ENCODE measurements at regions of chr11 and their contacts with region 1.

Region 1: GRCh38 chr11:15819679-15820286 is 536.6 kb downstream of the SOX6 start:
- DNase-seq: peak; percentile 78 to 92 (median 88)
- ATAC-seq: peak; percentile 93 to 94
- H3K4me3 ChIP-seq: no peak overlapping the region
- H3K27ac ChIP-seq: no peak overlapping the region
- H3K4me1 ChIP-seq: peaks cover 9% of the 10 kb centered on the region
- H3K27me3 ChIP-seq: no peaks in the 10 kb centered on the region

Region 2: GRCh38 chr11:15650105-15650938 is 169.5 kb before region 1 on chr11:
- intact Hi-C with region 1: loop called in 2 of 4 experiments (anchors 5 to 10 kb)
- DNase-seq: peak; percentile 96 to 99 (median 99)
- ATAC-seq: peak; percentile 98 to 100
- H3K4me3 ChIP-seq: peak overlapping the region; percentile 13
- H3K27ac ChIP-seq: peak overlapping the region; percentile 40
- H3K4me1 ChIP-seq: peaks cover 6% of the 10 kb centered on the region
- H3K27me3 ChIP-seq: no peaks in the 10 kb centered on the region

Region 3: GRCh38 chr11:15883455-15883920 is 63.7 kb after region 1 on chr11:
- intact Hi-C with region 1: no loop called
- DNase-seq: peak in 1 of 3 donors; percentile 57
- ATAC-seq: peak; percentile 53 to 79
- H3K4me3 ChIP-seq: no peak overlapping the region
- H3K27ac ChIP-seq: peak overlapping the region; percentile 56
- H3K4me1 ChIP-seq: no peaks in the 10 kb centered on the region
- H3K27me3 ChIP-seq: no peaks in the 10 kb centered on the region

Region 4: DNA sequence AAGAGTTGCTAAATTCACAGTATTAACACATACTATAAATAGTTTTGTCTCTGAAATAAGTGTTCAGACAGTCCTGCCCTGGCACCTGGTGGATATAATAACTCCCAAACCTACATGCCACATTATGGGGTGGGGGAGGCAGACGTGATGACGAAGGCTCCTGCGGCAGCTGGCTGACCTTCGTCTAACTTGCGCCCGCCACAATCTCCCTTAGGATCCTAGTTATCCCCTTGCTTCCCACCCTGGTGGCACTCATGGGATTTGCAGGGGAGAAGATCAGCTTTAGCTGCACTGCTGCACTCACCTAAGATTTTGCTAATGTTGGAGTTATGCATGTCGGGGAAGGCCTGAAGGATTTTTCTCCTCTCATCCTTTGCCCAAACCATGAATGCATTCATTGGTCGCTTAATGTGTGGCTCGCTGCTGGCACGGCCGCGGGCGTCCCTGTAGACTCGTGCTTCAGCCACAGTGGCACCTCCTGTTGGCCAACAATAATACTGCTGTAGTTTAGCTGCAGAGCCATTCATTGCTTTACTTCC is 169.0 kb after region 1 on chr11:
- intact Hi-C with region 1: loop called in 1 of 4 experiments (anchors 10 kb)
- DNase-seq: peak; percentile 19 to 64 (median 58)
- ATAC-seq: peak; percentile 80 to 87
- H3K4me3 ChIP-seq: no peak overlapping the region
- H3K27ac ChIP-seq: peak overlapping the region; percentile 60
- H3K4me1 ChIP-seq: peaks cover 6% of the 10 kb centered on the region
- H3K27me3 ChIP-seq: no peaks in the 10 kb centered on the region

Region 5: DNA sequence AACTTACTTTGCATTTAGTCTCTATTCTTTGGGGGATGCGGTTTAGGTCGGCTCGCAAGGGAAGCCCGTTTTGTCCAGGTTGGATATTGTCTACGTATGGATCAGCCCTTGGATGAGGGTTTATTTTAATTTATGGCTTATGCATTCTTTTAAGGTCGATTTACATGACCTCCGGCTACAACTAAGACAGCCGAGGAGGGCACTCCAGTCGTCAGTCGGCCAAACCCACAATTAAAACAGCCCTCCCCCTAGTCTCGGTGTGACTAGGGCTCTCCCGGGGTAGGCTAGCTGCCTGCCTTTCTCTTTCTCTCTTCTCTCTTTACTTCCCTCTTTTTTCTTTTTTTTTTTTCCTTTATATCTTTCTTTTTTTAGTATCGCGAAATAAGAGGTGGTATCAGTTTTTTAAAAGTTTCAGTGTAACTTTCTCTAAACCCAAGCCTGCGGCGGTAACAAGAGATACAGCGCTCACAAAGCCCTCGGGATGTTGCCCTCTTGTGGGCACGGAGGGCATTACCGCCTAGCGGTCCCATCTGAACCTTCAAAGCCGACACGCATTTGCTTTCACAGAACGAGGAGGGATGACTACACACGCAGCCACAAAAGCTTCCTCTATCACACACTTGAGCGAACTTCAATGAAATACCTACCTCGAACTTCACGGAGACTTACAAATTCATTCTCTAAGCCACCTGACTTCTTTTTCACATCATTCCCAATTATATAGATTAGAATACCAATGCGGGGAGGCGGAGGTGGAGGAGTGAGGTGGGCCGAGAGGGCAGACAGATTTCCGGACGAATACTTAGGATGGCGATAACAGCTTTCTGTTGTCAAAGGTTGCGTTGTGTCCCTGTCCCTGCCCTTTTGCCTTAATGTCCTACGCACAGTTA is 786.4 kb after region 1 on chr11:
- intact Hi-C with region 1: loop called in 1 of 4 experiments (anchors 10 kb)
- DNase-seq: peak; percentile 90 to 96 (median 95)
- ATAC-seq: peak; percentile 63 to 73
- H3K4me3 ChIP-seq: peak overlapping the region; percentile 74
- H3K27ac ChIP-seq: peak overlapping the region; percentile 92
- H3K4me1 ChIP-seq: no peaks in the 10 kb centered on the region
- H3K27me3 ChIP-seq: no peaks in the 10 kb centered on the region